IMR-90 (cell line): ENCODE measurements at regions of chr13 and their contacts with region 1.

Region 1: DNA sequence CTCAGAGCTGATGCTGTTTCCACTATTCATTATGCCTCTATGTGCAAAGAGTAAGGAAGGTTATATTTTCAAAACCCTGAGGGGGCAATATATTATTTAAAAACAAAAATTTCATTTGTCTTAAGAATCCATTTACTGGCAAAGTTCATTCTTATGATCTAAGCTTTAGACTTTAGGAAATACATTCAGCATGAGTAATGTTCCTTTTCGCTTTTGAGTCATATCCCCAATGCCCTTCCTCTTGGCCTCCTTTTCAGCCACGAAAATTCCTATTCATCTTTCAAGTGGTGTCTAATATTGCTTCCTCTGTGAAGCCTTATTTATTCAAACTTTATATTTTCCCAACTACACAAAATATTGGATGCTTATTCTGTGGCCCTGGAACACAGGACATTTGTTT is 1317.0 kb downstream of the PCDH9 start:
- DNase-seq: peak; percentile 86
- ATAC-seq: peak; percentile 76
- H3K4me3 ChIP-seq: no peak overlapping the region
- H3K27ac ChIP-seq: no peak overlapping the region; the same call in 1 of the 2 replicates
- H3K4me1 ChIP-seq: peaks cover 6% of the 10 kb centered on the region; the same call in 1 of the 2 replicates
- H3K27me3 ChIP-seq: no peaks in the 10 kb centered on the region
- CTCF ChIP-seq: no peak
- POLR2A ChIP-seq: no peak
- RAD21 ChIP-seq: no peak

Region 2: GRCh38 chr13:65264066-65264465 is 649.1 kb before region 1 on chr13:
- CTCF ChIA-PET with region 1: no interaction called
- POLR2A ChIA-PET with region 1: no interaction called
- dilution Hi-C with region 1: no loop called
- in situ Hi-C with region 1: no loop called
- intact Hi-C with region 1: no loop called
- DNase-seq: no peak
- ATAC-seq: no peak
- H3K4me3 ChIP-seq: no peak overlapping the region
- H3K27ac ChIP-seq: no peak overlapping the region
- H3K4me1 ChIP-seq: no peaks in the 10 kb centered on the region
- H3K27me3 ChIP-seq: no peaks in the 10 kb centered on the region
- CTCF ChIP-seq: no peak
- POLR2A ChIP-seq: no peak
- RAD21 ChIP-seq: no peak

Region 3: DNA sequence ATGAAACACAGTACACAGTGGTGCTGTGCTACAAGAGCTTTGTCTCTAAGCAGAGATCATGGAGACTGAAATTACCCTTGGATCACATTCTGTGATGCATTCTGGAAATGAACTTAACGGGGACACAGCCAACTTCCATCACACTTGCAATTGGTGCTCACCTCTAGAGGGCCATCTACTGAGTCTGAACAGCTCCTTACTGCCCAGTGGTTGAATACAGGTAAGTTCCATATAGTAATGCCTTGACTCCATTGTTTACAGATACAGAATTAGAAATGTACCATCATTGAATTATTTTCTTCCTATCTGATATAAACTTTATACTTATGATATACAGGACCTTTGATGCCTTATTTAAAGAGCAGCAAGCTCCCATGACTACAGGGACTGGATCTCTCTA is 630.6 kb after region 1 on chr13:
- CTCF ChIA-PET with region 1: no interaction called
- POLR2A ChIA-PET with region 1: no interaction called
- dilution Hi-C with region 1: no loop called
- in situ Hi-C with region 1: no loop called
- intact Hi-C with region 1: loop called (anchors 10 kb)
- DNase-seq: no peak
- ATAC-seq: no peak
- H3K4me3 ChIP-seq: no peak overlapping the region
- H3K27ac ChIP-seq: no peak overlapping the region
- H3K4me1 ChIP-seq: no peaks in the 10 kb centered on the region
- H3K27me3 ChIP-seq: no peaks in the 10 kb centered on the region
- CTCF ChIP-seq: no peak
- POLR2A ChIP-seq: no peak
- RAD21 ChIP-seq: no peak